ENCODE measurements at regions of chr2 and their contacts with region 1.

Region 1: GRCh38 chr2:205734436-205735037 is 52.2 kb downstream of the NRP2 start:
- DNase-seq: peak; percentile 60
- H3K4me3 ChIP-seq: no peak overlapping the region
- CTCF ChIP-seq: no peak

Region 2: DNA sequence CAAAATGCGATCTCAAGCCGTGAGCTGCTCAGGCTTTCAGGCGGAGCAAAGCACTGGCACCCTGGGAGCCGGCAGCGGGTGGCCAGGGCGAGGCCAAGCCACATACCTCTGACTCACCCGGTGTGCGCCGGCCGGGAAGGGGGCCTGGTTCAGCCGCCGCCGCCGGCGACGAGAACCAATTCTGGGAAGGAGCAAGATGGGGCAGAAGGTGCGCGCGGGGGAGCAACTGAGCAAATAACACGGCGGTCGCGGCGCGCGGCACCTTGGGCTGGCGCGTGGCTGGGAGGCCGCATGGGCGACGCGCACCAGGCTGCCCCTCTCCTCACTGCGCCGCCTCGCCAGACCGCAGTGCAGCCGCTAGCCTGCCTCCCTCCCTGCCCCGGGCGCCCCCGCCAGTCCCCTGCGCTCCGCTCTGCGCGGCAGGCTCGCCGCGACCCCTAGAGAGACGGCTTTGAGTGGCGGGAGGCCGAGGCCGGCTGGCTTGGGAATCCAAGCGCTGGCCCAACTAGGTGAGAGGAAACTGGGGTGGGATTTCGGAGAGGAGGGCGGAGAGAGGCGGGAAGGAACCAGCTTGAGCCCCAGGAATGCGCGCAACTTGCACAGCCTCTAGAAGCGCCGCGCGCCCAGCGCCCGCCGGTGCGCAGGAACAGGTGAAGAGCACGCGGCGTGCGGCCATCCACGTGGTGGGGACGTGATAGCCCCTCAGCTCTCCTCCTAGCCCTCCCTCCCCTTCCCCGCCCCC is 49.1 kb before region 1 on chr2:
- CTCF ChIA-PET with region 1: interaction called, 11 read pairs
- POLR2A ChIA-PET with region 1: interaction called, 42 read pairs
- DNase-seq: no peak
- H3K4me3 ChIP-seq: peak overlapping the region; percentile 85
- CTCF ChIP-seq: no peak

Region 3: GRCh38 chr2:205700331-205701132 is 34.0 kb before region 1 on chr2:
- CTCF ChIA-PET with region 1: interaction called, 3 read pairs
- POLR2A ChIA-PET with region 1: interaction called, 15 read pairs
- DNase-seq: no peak
- H3K4me3 ChIP-seq: no peak overlapping the region
- CTCF ChIP-seq: no peak

Region 4: DNA sequence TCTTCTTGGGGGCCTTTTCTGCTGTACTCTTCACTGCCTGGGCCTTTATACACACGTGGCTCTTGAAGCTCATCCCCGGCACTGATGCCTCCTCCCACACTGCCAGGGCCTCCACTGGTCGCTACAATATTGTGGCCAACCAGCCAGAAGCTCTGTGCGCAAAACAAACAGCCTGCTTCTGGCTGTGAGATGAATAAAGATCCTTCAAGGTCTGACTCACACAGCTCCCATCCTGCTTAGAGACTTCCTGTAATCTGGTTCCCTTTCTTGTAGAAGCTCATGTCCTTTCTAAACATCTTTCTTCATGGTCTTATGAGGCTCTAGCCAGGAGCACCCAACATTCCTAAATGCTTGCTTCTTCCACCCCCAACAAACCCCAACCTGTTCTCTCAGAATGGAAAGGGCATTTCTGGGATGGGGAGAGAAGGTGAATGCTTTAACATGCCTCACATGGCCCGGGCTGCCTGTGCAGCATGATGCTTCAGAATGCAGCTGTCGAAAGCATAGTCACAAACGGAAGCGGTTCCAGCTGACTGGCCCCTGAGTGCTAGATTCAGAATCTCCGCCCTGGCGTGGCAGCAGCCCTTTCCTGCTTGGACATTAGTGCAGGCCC is 27.7 kb before region 1 on chr2:
- CTCF ChIA-PET with region 1: interaction called, 3 read pairs
- POLR2A ChIA-PET with region 1: interaction called, 18 read pairs
- DNase-seq: peak; percentile 83
- H3K4me3 ChIP-seq: no peak overlapping the region; the same call in 1 of the 2 replicates
- CTCF ChIP-seq: no peak

Measured in AG04449 (cell line).